ENCODE measurements at regions of chr2 and their contacts with region 1.

Region 1: DNA sequence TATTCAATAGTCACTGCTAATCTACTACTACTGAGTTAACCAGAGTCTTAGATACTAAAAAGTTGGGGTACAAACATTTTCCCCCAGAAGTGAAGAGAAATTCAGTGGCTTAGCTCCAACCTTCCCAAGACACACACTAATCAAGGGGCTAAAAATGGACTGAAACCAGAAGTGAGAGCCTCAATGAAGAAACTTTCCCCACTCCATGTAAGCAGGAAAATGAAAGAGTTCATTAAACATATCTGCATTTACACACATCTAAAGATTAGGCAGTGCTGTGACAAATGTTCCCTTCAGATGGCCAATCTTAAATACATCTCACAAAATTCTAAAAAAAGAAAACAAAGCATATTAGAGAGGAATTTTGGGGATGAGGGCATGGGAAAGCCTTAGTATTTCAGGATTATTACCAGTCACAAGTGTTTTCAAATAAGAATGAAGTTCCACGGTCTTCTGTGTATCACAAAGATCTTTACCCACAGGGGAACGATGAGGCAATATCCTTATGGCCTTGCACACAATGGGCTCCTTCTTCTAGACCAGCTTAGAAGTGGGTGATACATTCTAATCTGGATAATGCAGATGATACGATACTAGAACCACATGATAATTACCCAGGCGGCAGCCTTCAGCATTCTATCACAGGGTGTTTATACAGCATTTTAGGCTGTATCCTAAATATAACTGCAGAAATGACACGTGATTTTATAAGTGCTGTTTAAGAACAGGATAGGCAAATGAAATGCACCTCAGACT is 17.1 kb downstream of the ANKRD44 start:
- DNase-seq: no peak
- ATAC-seq: peak; percentile 72
- H3K4me3 Mint-ChIP-seq: peak overlapping the region; percentile 75
- H3K27ac Mint-ChIP-seq: peak overlapping the region; percentile 88
- H3K4me1 Mint-ChIP-seq: peaks cover 75% of the 10 kb centered on the region
- H3K27me3 Mint-ChIP-seq: no peaks in the 10 kb centered on the region

Region 2: GRCh38 chr2:197198890-197199289 is 94.5 kb before region 1 on chr2:
- POLR2A ChIA-PET with region 1: interaction called, 11 read pairs
- DNase-seq: peak; percentile 83
- ATAC-seq: peak; percentile 83
- H3K4me3 Mint-ChIP-seq: peak overlapping the region; percentile 82
- H3K27ac Mint-ChIP-seq: peak overlapping the region; percentile 92
- H3K4me1 Mint-ChIP-seq: peaks cover 77% of the 10 kb centered on the region
- H3K27me3 Mint-ChIP-seq: no peaks in the 10 kb centered on the region

Region 3: GRCh38 chr2:197304556-197305011 is 11.2 kb after region 1 on chr2:
- POLR2A ChIA-PET with region 1: interaction called, 122 read pairs
- DNase-seq: no peak
- ATAC-seq: peak; percentile 12
- H3K4me3 Mint-ChIP-seq: peak overlapping the region; percentile 92
- H3K27ac Mint-ChIP-seq: peak overlapping the region; percentile 81
- H3K4me1 Mint-ChIP-seq: peaks cover 79% of the 10 kb centered on the region
- H3K27me3 Mint-ChIP-seq: no peaks in the 10 kb centered on the region

Region 4: GRCh38 chr2:197345846-197346370 is 52.5 kb after region 1 on chr2:
- POLR2A ChIA-PET with region 1: no interaction called
- DNase-seq: no peak
- ATAC-seq: no peak
- H3K4me3 Mint-ChIP-seq: no peak overlapping the region
- H3K27ac Mint-ChIP-seq: no peak overlapping the region
- H3K4me1 Mint-ChIP-seq: peaks cover 5% of the 10 kb centered on the region
- H3K27me3 Mint-ChIP-seq: no peaks in the 10 kb centered on the region

Region 5: GRCh38 chr2:197399887-197400540 is 106.6 kb after region 1 on chr2:
- POLR2A ChIA-PET with region 1: no interaction called
- DNase-seq: no peak
- ATAC-seq: no peak
- H3K4me3 Mint-ChIP-seq: no peak overlapping the region
- H3K27ac Mint-ChIP-seq: no peak overlapping the region
- H3K4me1 Mint-ChIP-seq: no peaks in the 10 kb centered on the region
- H3K27me3 Mint-ChIP-seq: no peaks in the 10 kb centered on the region

Region 6: DNA sequence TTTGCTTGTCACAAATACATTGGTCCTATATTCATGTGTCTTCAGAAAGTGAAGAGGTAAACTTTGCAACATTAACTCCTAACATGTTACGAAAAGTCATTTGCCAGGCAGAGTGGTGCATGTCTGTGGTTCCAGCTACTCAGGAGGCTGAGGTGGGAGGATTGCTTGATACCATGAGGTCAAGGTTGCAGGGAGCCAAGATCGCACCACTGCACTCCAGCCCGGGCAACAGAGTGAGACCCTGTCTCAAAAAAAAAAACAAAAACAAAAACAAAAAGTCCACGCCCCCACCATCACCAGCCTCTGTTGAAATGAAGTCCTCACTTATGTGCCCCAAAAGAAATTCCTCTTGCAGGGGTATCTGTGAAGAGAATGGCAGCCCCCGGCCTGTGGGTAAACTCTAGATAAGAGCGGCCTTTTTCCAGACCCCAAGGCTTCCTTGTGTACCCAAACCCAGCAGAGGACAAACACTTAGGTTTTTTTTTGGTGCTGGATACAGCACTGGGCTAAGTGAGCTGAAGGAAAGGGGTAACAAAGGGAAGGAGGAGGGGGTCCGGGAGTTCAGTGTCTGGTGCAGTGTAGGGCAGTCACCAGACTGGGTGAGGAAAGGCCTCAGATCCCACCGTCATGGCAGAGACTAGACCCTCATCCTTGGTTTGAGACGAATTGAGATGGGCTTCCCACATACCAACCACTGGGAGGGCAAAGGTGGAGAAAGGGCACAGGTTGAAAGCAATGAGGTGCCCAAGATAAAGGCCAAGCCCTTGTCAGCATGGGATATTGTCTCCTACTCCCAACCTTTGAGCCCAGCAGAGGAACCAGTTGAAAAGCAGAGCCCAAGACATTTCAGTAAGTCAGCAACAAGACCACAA is 187.0 kb after region 1 on chr2:
- POLR2A ChIA-PET with region 1: no interaction called
- DNase-seq: no peak
- ATAC-seq: no peak
- H3K4me3 Mint-ChIP-seq: no peak overlapping the region
- H3K27ac Mint-ChIP-seq: no peak overlapping the region
- H3K4me1 Mint-ChIP-seq: peaks cover 9% of the 10 kb centered on the region
- H3K27me3 Mint-ChIP-seq: no peaks in the 10 kb centered on the region

Region 7: DNA sequence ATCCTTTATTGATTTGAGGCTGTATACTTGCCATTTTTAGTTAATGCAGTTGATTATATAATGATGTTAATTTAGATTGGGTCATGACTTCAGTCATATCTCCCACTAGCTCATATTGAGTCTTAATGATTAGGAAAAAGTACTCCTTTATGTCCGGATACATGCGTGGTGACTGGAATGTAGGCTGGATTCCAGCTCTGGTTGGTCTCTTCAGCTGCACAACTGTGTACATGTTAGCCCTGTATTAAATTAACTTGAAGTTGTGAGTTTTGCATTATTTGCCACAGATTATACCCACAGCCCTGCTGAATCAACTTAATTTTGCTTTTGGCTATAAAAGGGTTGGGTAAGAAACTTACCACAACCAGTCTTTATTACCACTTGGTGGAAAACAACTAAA is 245.0 kb after region 1 on chr2:
- POLR2A ChIA-PET with region 1: no interaction called
- DNase-seq: no peak
- ATAC-seq: no peak
- H3K4me3 Mint-ChIP-seq: no peak overlapping the region
- H3K27ac Mint-ChIP-seq: no peak overlapping the region
- H3K4me1 Mint-ChIP-seq: peaks cover 16% of the 10 kb centered on the region
- H3K27me3 Mint-ChIP-seq: no peaks in the 10 kb centered on the region